Activated B cell treated with CpG ODN at 0.5 μM for 24 hours (primary cell): ENCODE measurements at regions of chr9 and their contacts with region 1.

Region 1: GRCh38 chr9:90827181-90827871 is 25.7 kb downstream of the SYK start:
- DNase-seq: no peak
- ATAC-seq: peak; percentile 64
- H3K4me3 Mint-ChIP-seq: peak overlapping the region; percentile 87
- H3K27ac Mint-ChIP-seq: peak overlapping the region; percentile 96
- H3K4me1 Mint-ChIP-seq: peaks cover 95% of the 10 kb centered on the region
- H3K27me3 Mint-ChIP-seq: no peaks in the 10 kb centered on the region
- CTCF ChIP-seq: no peak

Region 2: DNA sequence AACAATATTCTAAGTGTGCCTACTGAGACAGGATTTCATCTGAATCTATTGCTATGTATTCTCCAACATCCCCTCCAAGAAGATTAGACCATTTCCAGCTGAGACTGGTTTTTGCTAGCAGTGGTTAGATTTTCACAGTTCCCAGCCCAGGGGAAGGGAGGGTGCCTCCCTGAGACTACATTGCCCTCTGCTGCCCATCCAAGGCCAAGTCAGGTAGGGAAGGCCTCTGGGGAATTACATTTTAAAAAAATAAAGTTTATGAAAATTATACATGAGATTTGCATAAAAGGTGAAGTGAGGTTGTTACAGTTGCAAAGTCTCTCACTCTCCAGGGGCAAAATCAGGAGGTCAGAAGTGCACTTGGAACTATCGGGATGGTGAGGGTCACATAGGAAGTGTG is 53.7 kb before region 1 on chr9:
- CTCF ChIA-PET with region 1: interaction called, 8 read pairs
- POLR2A ChIA-PET with region 1: interaction called, 15 read pairs
- intact Hi-C with region 1: loop called (anchors 1 kb)
- DNase-seq: no peak
- ATAC-seq: peak; percentile 16
- H3K4me3 Mint-ChIP-seq: peak overlapping the region; percentile 28
- H3K27ac Mint-ChIP-seq: peak overlapping the region; percentile 65
- H3K4me1 Mint-ChIP-seq: peaks cover 65% of the 10 kb centered on the region
- H3K27me3 Mint-ChIP-seq: no peaks in the 10 kb centered on the region
- CTCF ChIP-seq: no peak

Region 3: GRCh38 chr9:90795871-90796317 is 31.4 kb before region 1 on chr9:
- CTCF ChIA-PET with region 1: interaction called, 3 read pairs
- POLR2A ChIA-PET with region 1: interaction called, 102 read pairs
- intact Hi-C with region 1: loop called (anchors 1 kb)
- DNase-seq: no peak
- ATAC-seq: peak; percentile 56
- H3K4me3 Mint-ChIP-seq: peak overlapping the region; percentile 50
- H3K27ac Mint-ChIP-seq: peak overlapping the region; percentile 89
- H3K4me1 Mint-ChIP-seq: peaks cover 72% of the 10 kb centered on the region
- H3K27me3 Mint-ChIP-seq: no peaks in the 10 kb centered on the region
- CTCF ChIP-seq: no peak

Region 4: DNA sequence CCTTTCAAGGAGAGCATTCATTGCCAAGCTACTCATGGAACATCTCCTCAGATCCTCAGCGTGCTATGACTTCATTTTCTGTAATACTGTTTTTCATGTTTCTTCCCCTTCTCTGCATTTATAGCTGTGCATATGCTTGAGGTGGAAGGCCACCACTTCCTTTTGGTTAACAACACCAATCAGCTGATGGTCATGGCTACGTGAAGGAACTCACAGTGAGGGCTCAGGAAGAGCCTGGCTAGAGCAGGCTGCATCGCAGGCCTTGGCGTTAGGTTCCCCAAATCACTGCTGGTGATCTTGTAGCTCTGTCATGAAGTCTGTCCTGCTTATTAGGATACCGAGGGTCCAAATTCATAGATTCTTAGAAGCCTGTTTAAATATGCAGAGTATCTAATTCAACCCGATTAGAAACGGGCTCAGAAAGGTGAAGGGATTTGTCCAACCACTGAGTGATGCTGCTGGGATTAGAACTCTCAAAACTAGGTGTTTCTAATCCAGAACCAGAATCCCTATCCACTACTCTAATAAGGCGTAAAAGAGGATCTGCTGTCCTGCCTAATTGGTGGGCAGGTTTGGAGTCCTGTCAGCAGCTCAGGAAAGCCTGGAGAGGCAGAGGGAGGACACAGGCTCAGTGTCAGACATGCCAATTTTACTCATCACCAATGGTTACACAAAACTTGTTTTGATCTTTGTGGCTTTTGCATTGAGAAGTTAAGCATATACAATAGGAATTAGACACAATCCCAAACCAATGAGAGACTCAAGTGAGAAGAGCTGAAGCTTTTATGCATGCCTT is 18.2 kb before region 1 on chr9:
- CTCF ChIA-PET with region 1: interaction called, 5 read pairs
- POLR2A ChIA-PET with region 1: interaction called, 38 read pairs
- intact Hi-C with region 1: no loop called
- DNase-seq: no peak
- ATAC-seq: peak; percentile 32
- H3K4me3 Mint-ChIP-seq: peak overlapping the region; percentile 75
- H3K27ac Mint-ChIP-seq: peak overlapping the region; percentile 92
- H3K4me1 Mint-ChIP-seq: peaks cover 98% of the 10 kb centered on the region
- H3K27me3 Mint-ChIP-seq: no peaks in the 10 kb centered on the region
- CTCF ChIP-seq: no peak

Region 5: GRCh38 chr9:90838100-90838499 is 10.8 kb after region 1 on chr9:
- CTCF ChIA-PET with region 1: interaction called, 10 read pairs
- POLR2A ChIA-PET with region 1: interaction called, 25 read pairs
- intact Hi-C with region 1: loop called (anchors 1 kb)
- DNase-seq: no peak
- ATAC-seq: no peak
- H3K4me3 Mint-ChIP-seq: peak overlapping the region; percentile 36
- H3K27ac Mint-ChIP-seq: no peak overlapping the region
- H3K4me1 Mint-ChIP-seq: peaks cover 69% of the 10 kb centered on the region
- H3K27me3 Mint-ChIP-seq: no peaks in the 10 kb centered on the region
- CTCF ChIP-seq: no peak